PC-9 (cell line): ENCODE measurements at regions of chr11 and their contacts with region 1.

Region 1: DNA sequence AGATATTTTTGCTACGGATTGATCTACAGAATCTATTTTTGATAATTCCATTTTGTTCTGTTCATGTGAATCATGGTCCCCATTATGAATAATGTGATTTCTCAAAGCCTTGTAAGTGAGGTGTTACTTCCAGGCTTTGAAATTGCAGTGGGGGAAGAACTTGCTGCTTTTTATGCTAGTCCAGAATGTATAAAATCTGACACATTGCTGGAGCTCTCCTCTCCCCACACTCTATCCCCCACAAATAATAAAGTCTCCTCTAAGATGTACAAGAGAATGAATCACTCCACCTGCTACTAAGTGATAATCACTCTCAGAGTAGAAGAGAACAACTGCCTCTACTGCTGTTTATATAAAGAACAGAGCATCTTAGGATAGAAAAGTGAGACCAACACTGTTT is 5.9 kb upstream of the RAB6A start:
- DNase-seq: no peak
- H3K4me3 ChIP-seq: no peak overlapping the region
- H3K27ac ChIP-seq: no peak overlapping the region
- H3K4me1 ChIP-seq: 0 out of 2 replicates have a peak, but pooled peaks cover 5% of the 10 kb centered on the region
- H3K27me3 ChIP-seq: no peaks in the 10 kb centered on the region
- CTCF ChIP-seq: no peak

Region 2: GRCh38 chr11:73458201-73458600 is 308.6 kb before region 1 on chr11:
- CTCF ChIA-PET with region 1: no interaction called
- POLR2A ChIA-PET with region 1: interaction called, 47 read pairs
- intact Hi-C with region 1: no loop called
- DNase-seq: no peak
- H3K4me3 ChIP-seq: no peak overlapping the region
- H3K27ac ChIP-seq: no peak overlapping the region
- H3K4me1 ChIP-seq: no peaks in the 10 kb centered on the region
- H3K27me3 ChIP-seq: no peaks in the 10 kb centered on the region
- CTCF ChIP-seq: no peak

Region 3: GRCh38 chr11:73779084-73779902 is 12.5 kb after region 1 on chr11:
- CTCF ChIA-PET with region 1: interaction called, 3 read pairs
- POLR2A ChIA-PET with region 1: interaction called, 13 read pairs
- intact Hi-C with region 1: loop called (anchors 1 kb)
- DNase-seq: peak; percentile 99
- H3K4me3 ChIP-seq: peak overlapping the region; percentile 69
- H3K27ac ChIP-seq: peak overlapping the region; percentile 98
- H3K4me1 ChIP-seq: peaks cover 33% of the 10 kb centered on the region
- H3K27me3 ChIP-seq: no peaks in the 10 kb centered on the region
- CTCF ChIP-seq: no peak